Left lung (tissue), 14 donors: ENCODE measurements at regions of chr2 and their contacts with region 1.

Region 1: DNA sequence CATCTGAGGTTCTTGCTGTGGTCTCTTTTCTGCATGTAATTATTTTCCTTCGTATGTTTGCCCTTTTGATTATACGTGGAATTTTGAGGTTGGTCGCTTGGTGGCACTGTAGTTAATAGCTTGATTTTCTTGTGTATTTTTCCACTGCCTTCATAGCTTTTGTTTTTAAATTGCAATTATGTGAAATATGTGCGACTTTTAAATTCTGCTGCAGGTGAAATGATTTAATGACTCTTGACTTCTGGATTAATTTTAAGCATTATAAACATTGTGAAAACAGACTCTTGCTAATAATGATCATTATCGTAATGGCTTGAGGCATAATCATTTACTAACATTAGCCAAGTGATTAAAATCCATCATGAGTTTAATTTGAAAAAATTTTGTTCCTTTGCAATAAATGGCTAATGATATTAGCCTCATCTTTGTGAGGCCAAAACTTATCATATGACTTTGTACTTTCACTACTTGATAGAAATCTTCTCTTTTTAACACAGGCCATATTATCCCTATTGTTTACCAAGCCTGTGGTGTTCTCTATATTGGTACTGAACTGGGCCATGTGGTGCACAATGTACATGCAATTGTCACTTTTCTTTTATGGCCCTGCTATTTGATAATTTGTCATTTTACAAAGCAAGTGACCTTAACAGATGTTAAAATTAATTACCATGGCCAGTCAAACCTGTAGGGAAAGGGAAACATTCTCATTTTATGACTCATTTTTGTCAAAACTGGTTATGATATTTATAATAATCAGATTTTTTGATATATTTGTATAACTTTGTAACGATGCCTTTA is 62.8 kb upstream of the NEUROD1 start:
- DNase-seq: peak in 2 of 4 donors; percentile 64 to 65
- ATAC-seq: peak; percentile 82
- H3K4me3 ChIP-seq: no peak overlapping the region
- H3K27ac ChIP-seq: no peak overlapping the region
- H3K4me1 ChIP-seq: peaks cover 0 to 6% of the 10 kb centered on the region in 2 donors
- H3K27me3 ChIP-seq: no peaks in the 10 kb centered on the region
- CTCF ChIP-seq: peak; percentile 46 to 49

Region 2: DNA sequence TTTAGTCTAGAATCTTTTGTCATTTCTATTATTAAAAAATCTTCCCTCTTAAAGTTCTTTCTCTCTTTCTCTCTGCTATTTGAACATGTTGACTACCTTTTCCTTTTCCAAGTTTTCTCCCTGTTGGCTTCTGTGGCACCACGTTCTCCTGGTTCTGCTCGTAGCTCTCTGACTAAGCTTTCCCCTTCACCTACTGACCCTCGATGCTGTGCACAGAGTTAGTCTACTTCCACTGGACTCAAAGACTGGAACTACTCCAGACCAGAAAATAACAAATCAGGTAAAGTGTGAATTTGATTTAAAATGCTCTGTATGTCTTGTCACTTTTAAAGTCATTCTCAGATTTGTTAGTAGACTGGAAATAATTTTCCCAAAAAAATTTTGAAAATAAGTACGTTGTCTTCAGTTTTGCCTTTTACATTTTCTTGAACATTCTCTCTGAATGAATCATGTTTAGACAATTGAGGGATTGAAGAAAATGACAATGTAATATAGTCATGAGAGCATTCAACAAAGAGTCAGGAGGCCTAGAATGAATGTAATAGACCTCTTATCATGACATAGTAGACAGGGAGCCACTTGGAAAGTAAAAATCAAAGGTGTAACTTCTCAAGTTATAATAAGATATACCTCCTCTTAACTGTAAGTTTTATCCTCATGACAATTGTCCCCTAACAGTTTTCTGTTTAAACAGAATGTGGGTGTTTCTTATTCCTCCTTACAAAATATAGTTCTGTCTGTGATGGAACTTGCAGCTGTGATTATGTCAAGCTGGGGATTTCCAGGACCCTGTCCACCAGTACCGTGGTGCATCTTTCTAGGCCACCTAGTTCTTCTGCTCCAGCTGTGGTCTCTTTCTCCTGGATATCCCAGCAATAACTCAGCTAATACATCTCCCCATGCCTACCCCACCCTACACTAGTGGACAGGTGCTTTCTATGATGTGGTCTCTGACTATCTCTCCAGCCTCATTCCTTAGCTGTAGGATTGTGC is 173.9 kb after region 1 on chr2:
- intact Hi-C with region 1: loop called in 1 of 2 experiments (anchors 10 kb)
- DNase-seq: no peak
- ATAC-seq: no peak
- H3K4me3 ChIP-seq: no peak overlapping the region
- H3K27ac ChIP-seq: no peak overlapping the region
- H3K4me1 ChIP-seq: no peaks in the 10 kb centered on the region
- H3K27me3 ChIP-seq: no peaks in the 10 kb centered on the region
- CTCF ChIP-seq: no peak

Region 3: GRCh38 chr2:182077451-182078142 is 334.5 kb after region 1 on chr2:
- intact Hi-C with region 1: loop called in 1 of 2 experiments (anchors 5 kb)
- DNase-seq: peak in 2 of 4 donors; percentile 78 to 87
- ATAC-seq: peak; percentile 97
- H3K4me3 ChIP-seq: no peak overlapping the region
- H3K27ac ChIP-seq: no peak overlapping the region
- H3K4me1 ChIP-seq: no peaks in the 10 kb centered on the region
- H3K27me3 ChIP-seq: no peaks in the 10 kb centered on the region
- CTCF ChIP-seq: peak; percentile 22 to 70